Tibial artery (tissue), 4 donors: ENCODE measurements at regions of chr10 and their contacts with region 1.

Region 1: GRCh38 chr10:62109587-62110293 is 158.9 kb downstream of the RTKN2 start:
- DNase-seq: no peak
- H3K4me3 ChIP-seq: no peak overlapping the region
- H3K27ac ChIP-seq: no peak overlapping the region
- H3K4me1 ChIP-seq: no peaks in the 10 kb centered on the region
- H3K27me3 ChIP-seq: no peaks in the 10 kb centered on the region
- CTCF ChIP-seq: no peak

Region 2: DNA sequence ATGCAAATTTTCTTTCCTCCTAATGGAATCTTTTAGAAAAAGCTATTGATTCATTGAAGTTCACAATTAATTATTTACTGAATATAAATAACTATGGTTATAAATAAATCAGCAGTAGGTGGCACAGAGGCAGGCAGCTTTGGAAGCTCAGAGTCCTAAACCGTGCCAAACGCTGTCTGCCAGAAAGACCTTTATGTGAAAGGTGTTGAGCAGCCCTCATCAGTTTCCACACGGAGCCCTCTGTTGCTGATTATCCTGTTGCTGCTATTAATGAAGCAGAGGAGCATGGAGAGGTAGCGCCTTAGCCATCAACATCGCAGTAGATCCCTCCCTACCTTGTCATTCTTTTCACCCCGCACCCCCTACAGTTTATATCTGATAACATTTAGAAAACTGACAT is 107.9 kb after region 1 on chr10:
- intact Hi-C with region 1: loop called (anchors 10 kb)
- DNase-seq: no peak
- H3K4me3 ChIP-seq: no peak overlapping the region
- H3K27ac ChIP-seq: no peak overlapping the region
- H3K4me1 ChIP-seq: no peaks in the 10 kb centered on the region
- H3K27me3 ChIP-seq: no peaks in the 10 kb centered on the region
- CTCF ChIP-seq: no peak